ENCODE measurements at regions of chr15 and their contacts with region 1.

Region 1: DNA sequence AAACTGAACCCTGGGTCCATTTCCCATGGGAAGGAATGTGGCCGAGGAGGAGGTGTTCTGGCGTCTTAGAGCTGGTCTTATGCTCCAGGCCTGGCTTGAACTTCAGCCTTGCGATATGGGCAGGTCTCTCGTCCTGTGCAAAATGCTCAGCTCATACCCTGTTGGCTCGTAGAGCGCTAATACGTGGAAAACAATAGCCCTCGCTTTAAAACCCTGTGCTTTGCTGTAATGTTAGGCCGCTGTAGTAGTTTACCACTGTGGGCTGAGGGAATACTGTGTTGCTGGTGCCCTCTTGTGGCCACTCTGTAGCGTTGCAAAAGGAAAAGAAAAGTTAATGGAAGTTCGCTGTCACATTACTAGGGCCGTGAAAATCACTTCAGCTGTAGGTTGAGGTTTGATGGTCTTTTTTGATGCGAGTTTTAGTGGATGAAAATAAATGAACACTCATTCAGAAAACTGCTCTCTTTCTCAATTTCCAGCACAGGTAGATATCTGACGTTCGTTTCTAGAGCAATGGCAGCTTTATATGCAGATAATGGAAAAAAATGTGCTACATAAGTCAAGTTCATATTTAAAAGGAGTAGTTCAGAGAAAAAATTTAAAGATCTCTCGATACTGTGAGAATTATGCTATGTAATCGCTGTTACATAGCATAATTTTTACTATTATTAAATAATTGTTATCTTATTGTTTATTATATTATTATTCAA is 92.9 kb downstream of the MCTP2 start:
- DNase-seq: peak; percentile 48
- H3K4me3 ChIP-seq: no peak overlapping the region
- H3K27ac ChIP-seq: no peak overlapping the region
- H3K27me3 ChIP-seq: no peaks in the 10 kb centered on the region
- CTCF ChIP-seq: peak; percentile 95

Region 2: GRCh38 chr15:93882141-93882540 is 442.1 kb before region 1 on chr15:
- CTCF ChIA-PET with region 1: no interaction called
- POLR2A ChIA-PET with region 1: no interaction called
- DNase-seq: no peak
- H3K4me3 ChIP-seq: no peak overlapping the region
- H3K27ac ChIP-seq: no peak overlapping the region
- H3K27me3 ChIP-seq: no peaks in the 10 kb centered on the region
- CTCF ChIP-seq: no peak

Region 3: DNA sequence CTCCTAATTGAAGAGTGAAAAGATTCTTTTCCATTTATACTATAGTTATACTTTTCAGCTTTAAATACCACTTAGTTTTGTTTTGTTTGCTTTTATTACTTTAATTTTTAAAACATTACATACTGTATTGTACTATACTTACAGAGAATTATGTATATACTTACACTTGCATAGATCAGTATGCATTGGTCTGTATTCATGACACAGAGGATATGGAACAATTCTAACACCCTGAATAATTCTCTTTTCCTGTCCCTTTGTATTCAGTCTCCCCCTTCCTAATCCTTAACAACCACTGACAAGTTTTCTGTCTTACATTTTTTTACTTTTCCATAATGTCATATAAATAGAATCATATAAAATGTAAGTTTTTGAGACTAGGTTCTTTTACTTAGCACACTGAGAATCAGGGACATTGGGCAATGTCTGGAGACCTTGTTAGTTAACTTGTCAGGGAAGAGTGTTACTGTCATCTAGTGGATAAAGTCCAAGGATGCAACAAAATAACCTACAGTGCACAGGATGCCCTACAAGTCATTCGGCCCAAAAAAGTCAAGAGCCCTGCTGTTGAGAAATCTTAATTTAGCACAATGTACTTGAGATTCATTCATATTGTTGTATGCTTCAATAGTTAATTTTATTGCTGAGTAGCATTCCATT is 188.7 kb before region 1 on chr15:
- CTCF ChIA-PET with region 1: interaction called, 15 read pairs
- POLR2A ChIA-PET with region 1: no interaction called
- DNase-seq: no peak
- H3K4me3 ChIP-seq: no peak overlapping the region
- H3K27ac ChIP-seq: no peak overlapping the region
- H3K27me3 ChIP-seq: peaks cover 3% of the 10 kb centered on the region
- CTCF ChIP-seq: 0 out of 2 replicates have a peak, but pooled peaks have one; percentile 13

Region 4: GRCh38 chr15:94174399-94174802 is 149.9 kb before region 1 on chr15:
- CTCF ChIA-PET with region 1: interaction called, 12 read pairs
- POLR2A ChIA-PET with region 1: no interaction called
- DNase-seq: peak; percentile 50
- H3K4me3 ChIP-seq: no peak overlapping the region
- H3K27ac ChIP-seq: no peak overlapping the region
- H3K27me3 ChIP-seq: no peaks in the 10 kb centered on the region
- CTCF ChIP-seq: no peak

Region 5: GRCh38 chr15:94212291-94212690 is 112.0 kb before region 1 on chr15:
- CTCF ChIA-PET with region 1: no interaction called
- POLR2A ChIA-PET with region 1: no interaction called
- DNase-seq: no peak
- H3K4me3 ChIP-seq: no peak overlapping the region
- H3K27ac ChIP-seq: no peak overlapping the region
- H3K27me3 ChIP-seq: no peaks in the 10 kb centered on the region
- CTCF ChIP-seq: no peak

Region 6: DNA sequence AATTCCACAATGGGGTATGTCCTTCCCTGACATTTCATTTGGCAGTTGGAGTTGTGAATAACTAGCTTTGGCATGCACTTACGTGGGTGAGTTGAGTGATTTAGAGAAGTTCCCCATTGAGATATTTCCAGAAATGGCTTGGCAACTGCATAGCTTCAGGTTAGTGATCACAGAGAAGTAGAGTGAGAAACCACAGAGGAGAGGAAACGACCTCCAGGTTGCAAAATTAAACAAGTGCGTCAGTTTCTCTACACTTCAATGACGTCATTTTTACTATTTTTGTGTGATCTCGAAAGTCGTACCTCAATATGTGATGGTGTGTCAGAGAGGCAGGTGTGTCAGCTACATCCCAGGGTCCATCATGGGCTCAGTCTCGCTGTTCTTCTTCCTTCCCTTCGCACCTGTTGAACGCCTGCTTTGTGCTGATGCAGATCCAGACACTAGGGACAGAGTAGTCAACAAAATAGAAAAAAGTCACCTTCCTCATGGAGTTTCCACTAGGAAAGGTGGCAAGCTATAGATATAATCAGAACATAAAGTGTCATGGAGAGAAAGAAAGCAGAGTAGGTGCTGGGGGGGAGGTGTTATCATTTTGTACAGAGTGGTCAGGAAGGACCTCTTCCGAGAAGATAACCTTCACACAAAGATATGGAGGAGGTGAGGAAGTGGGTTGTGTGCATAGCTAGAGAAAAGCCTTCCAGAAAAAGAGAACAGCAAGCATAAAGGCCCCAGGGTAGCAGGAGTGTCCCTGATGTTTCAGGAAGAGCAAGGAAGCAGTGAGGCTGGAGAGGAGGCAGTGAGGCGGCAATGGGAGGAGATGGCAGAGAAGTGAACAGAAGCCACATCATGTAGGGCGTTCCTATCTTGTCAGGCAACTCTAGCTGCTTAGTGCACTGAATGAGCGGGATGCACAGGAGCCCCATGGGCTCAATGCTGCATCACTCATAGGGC is 17.3 kb before region 1 on chr15:
- CTCF ChIA-PET with region 1: interaction called, 30 read pairs
- POLR2A ChIA-PET with region 1: no interaction called
- DNase-seq: no peak
- H3K4me3 ChIP-seq: no peak overlapping the region
- H3K27ac ChIP-seq: peak overlapping the region; percentile 3
- H3K27me3 ChIP-seq: no peaks in the 10 kb centered on the region
- CTCF ChIP-seq: no peak

Region 7: DNA sequence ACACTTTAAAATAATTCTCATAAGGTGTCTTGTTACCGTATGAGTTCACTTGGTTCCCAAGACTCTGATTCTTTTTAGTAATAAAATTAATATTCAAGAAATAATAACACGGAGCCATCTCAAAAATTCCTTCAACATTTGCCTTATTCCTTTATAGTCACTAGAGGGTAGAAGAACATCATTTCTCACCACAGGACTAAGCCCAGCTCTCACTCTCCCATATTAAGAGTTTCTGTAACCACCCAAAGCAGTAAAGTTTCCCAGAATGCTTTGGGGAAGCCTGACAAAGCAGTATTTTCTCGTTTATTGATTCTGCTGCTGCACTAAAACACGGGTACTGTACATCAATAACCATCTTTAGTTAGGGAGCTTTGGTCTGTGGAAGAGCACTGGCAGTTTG is 22.0 kb after region 1 on chr15:
- CTCF ChIA-PET with region 1: interaction called, 39 read pairs
- POLR2A ChIA-PET with region 1: no interaction called
- DNase-seq: no peak
- H3K4me3 ChIP-seq: no peak overlapping the region
- H3K27ac ChIP-seq: no peak overlapping the region
- H3K27me3 ChIP-seq: no peaks in the 10 kb centered on the region
- CTCF ChIP-seq: no peak

Region 8: GRCh38 chr15:94535298-94536048 is 211.2 kb after region 1 on chr15:
- CTCF ChIA-PET with region 1: no interaction called
- POLR2A ChIA-PET with region 1: no interaction called
- DNase-seq: no peak
- H3K4me3 ChIP-seq: no peak overlapping the region
- H3K27ac ChIP-seq: no peak overlapping the region
- H3K27me3 ChIP-seq: no peaks in the 10 kb centered on the region
- CTCF ChIP-seq: no peak